ENCODE measurements at regions of chr7 and their contacts with region 1.

Region 1: GRCh38 chr7:150903606-150904005 is 51.3 kb downstream of the AOC1 start:
- DNase-seq: peak; percentile 92
- H3K4me3 ChIP-seq: no peak overlapping the region
- H3K27ac ChIP-seq: peak overlapping the region; percentile 46 to 84 (median 80)
- H3K4me1 ChIP-seq: peaks cover 0 to 44% (median 41%) of the 10 kb centered on the region in 4 donors
- H3K27me3 ChIP-seq: no peaks in the 10 kb centered on the region
- CTCF ChIP-seq: no peak
- EP300 ChIP-seq: peak in 1 of 4 donors; percentile 28
- POLR2A ChIP-seq: no peak

Region 2: DNA sequence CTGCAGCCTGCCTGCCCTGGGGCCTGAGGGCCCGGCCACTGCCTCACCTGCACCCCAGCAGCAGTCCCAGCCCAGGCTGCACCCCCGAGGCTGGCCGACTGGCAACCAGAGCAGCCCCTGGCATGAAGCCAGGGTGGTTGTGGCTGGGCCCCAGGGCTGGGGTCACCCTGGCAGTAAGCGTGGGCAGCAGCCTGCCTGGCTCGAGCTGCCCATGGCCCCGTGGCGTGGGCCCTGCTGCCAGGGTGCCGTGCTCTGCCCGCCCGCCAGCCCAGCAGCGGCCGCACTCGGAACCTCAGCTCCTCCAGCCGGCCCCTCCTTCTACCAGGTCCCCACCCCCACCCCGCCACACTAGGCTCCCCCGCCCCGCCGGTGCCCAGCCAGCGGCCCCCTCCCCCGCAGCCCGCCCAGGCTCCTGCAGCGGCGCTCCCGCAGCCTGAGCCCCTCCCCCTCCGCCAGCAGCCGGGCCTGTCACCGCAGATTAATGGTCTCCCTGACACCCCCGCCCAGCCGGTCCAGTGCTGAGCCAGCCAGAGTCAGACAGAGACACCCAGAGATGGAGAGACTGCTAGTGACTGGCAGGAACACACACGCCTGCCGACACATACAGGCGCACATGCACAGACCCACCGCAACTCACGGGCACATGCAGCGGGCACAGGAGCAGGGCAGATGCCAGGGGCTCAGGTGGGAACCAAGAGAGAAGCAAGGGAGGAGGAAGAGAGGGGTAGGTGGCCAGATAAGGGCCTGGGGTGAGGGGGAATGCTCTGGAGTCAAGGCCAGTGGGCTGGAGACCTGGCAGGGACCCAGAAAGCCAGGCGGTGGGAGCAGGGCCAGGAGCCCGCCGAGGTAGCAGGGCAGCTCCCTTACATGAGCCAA is 52.2 kb after region 1 on chr7:
- intact Hi-C with region 1: loop called (anchors 1 kb)
- DNase-seq: peak; percentile 95
- H3K4me3 ChIP-seq: peak overlapping the region; percentile 18 to 59 (median 48)
- H3K27ac ChIP-seq: peak overlapping the region; percentile 77 to 97 (median 92)
- H3K4me1 ChIP-seq: peaks cover 0 to 76% (median 65%) of the 10 kb centered on the region in 4 donors
- H3K27me3 ChIP-seq: no peaks in the 10 kb centered on the region
- CTCF ChIP-seq: peak; percentile 21 to 45 (median 27)
- EP300 ChIP-seq: no peak
- POLR2A ChIP-seq: peak; percentile 34

Measured in sigmoid colon (tissue), 7 donors.